PC-3 (cell line): ENCODE measurements at regions of chr3 and their contacts with region 1.

Region 1: DNA sequence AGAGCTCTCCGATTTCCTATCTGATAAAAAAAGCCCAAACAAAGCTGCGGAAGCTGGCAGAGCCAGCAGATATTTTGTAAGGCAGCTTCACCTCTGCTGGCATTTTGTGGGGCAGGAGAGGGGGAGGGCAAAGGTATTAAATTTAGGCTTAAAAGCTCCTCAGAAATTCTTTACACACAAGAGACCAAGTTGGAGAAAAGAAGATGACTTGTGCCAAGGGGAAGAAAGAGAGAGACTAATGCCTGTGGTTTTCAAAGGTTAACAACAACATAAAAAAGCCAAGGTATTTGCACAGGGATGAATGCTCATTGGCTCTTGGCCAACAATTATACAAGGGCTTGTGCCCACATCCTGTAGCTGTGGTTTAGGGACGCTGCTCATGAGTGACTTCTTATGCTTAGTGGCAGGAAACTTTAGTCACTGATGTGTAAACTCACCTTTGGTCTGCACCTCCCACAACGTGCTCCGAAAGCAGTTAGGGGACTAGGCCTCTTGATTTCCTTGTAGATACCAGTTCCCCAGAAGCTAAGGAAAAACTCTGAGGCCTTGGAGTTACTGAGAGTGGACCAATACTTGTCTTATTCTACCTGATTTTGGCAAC is 152.9 kb downstream of the TPRG1 start:
- DNase-seq: peak; percentile 99
- ATAC-seq: peak; percentile 96
- H3K4me3 ChIP-seq: no peak overlapping the region
- H3K27ac ChIP-seq: peak overlapping the region; percentile 85
- H3K4me1 ChIP-seq: peaks cover 26% of the 10 kb centered on the region
- H3K27me3 ChIP-seq: no peaks in the 10 kb centered on the region
- CTCF ChIP-seq: no peak

Region 2: GRCh38 chr3:189249987-189250386 is 74.7 kb before region 1 on chr3:
- CTCF ChIA-PET with region 1: no interaction called
- POLR2A ChIA-PET with region 1: no interaction called
- intact Hi-C with region 1: no loop called
- DNase-seq: no peak
- ATAC-seq: no peak
- H3K4me3 ChIP-seq: no peak overlapping the region
- H3K27ac ChIP-seq: no peak overlapping the region
- H3K4me1 ChIP-seq: no peaks in the 10 kb centered on the region
- H3K27me3 ChIP-seq: no peaks in the 10 kb centered on the region
- CTCF ChIP-seq: no peak

Region 3: DNA sequence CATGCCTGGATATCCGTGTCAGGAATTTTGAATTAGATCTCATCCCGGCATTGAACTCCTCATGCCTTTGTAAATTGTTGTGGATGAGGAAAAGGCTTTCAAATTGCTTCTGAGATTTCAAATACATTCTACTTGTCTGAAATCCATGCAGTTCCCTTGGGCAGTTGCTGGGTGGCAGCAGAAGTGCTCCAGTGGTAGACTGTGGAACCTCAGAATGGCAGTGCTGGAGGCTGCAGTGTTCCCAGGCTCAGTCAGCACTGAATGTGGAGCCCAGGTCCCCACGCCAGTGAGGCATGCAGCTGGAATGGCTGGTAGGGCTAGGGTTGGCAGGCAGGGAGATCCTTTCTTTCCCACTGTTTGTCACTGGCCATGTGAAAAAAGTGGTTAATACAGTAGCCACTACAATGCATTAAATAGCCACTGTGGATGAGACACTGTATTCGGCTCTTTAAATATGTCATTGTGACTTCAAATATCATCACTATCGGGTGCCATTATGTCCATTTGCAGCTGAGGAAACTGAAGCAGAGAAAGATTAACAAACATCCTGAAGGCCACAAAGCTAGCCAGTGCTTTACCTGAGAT is 54.3 kb before region 1 on chr3:
- CTCF ChIA-PET with region 1: interaction called, 11 read pairs
- POLR2A ChIA-PET with region 1: no interaction called
- intact Hi-C with region 1: loop called (anchors 1 kb)
- DNase-seq: peak; percentile 93
- ATAC-seq: peak; percentile 86
- H3K4me3 ChIP-seq: no peak overlapping the region
- H3K27ac ChIP-seq: peak overlapping the region; percentile 38
- H3K4me1 ChIP-seq: peaks cover 61% of the 10 kb centered on the region
- H3K27me3 ChIP-seq: no peaks in the 10 kb centered on the region
- CTCF ChIP-seq: peak; percentile 94

Region 4: GRCh38 chr3:189304446-189305351 is 19.9 kb before region 1 on chr3:
- CTCF ChIA-PET with region 1: interaction called, 3 read pairs
- POLR2A ChIA-PET with region 1: interaction called, 3 read pairs
- intact Hi-C with region 1: loop called (anchors 1 kb)
- DNase-seq: peak; percentile 99
- ATAC-seq: peak; percentile 83
- H3K4me3 ChIP-seq: peak overlapping the region; percentile 48; the same call in 1 of the 2 replicates
- H3K27ac ChIP-seq: peak overlapping the region; percentile 94
- H3K4me1 ChIP-seq: peaks cover 40% of the 10 kb centered on the region
- H3K27me3 ChIP-seq: no peaks in the 10 kb centered on the region
- CTCF ChIP-seq: no peak

Region 5: GRCh38 chr3:189512039-189512438 is 187.4 kb after region 1 on chr3:
- CTCF ChIA-PET with region 1: no interaction called
- POLR2A ChIA-PET with region 1: interaction called, 3 read pairs
- intact Hi-C with region 1: loop called (anchors 1 kb)
- DNase-seq: no peak
- ATAC-seq: no peak
- H3K4me3 ChIP-seq: no peak overlapping the region
- H3K27ac ChIP-seq: peak overlapping the region; percentile 82; the same call in 1 of the 2 replicates
- H3K4me1 ChIP-seq: peaks cover 21% of the 10 kb centered on the region
- H3K27me3 ChIP-seq: no peaks in the 10 kb centered on the region
- CTCF ChIP-seq: no peak

Region 6: GRCh38 chr3:189710620-189711402 is 386.2 kb after region 1 on chr3:
- CTCF ChIA-PET with region 1: interaction called, 4 read pairs
- POLR2A ChIA-PET with region 1: no interaction called
- intact Hi-C with region 1: loop called (anchors 1 kb)
- DNase-seq: peak; percentile 95
- ATAC-seq: peak; percentile 71
- H3K4me3 ChIP-seq: no peak overlapping the region
- H3K27ac ChIP-seq: peak overlapping the region; percentile 66
- H3K4me1 ChIP-seq: peaks cover 55% of the 10 kb centered on the region
- H3K27me3 ChIP-seq: no peaks in the 10 kb centered on the region
- CTCF ChIP-seq: no peak

Region 7: DNA sequence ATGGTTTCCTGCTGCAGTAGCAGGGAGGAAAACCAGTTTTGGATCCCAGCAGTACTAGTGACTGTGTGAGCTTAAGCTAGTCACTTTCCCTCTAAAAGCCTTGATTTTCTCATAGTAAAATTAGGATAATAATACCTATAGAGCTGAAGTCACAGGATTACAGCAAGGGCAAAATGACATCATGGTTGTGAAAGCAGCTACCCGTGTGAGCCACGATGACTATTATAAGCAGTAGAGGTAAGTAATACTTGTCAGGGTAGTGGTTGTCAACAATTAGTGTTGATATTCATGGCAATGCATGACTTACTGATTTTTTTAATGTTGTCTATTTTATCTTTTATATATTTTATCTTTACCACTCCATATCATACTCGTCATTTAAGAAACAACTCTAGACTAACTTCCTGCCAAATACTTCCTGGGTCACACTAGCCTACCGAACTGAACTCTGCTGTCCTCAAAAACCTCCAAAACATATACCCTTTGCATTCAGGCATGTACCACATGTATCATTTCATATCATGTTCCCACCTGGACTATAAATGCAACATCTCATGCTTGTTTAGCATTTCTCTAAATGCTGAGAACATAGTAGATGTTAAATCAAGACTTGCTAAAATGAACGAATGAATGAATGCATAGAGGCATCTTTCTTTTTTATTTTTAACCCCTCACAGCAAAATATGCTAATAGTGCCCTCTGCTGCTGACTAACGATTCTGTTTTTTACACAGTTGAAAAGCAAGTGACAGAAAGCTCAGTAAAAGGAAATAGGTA is 623.5 kb after region 1 on chr3:
- CTCF ChIA-PET with region 1: interaction called, 4 read pairs
- POLR2A ChIA-PET with region 1: no interaction called
- intact Hi-C with region 1: loop called (anchors 2 kb)
- DNase-seq: peak; percentile 86
- ATAC-seq: peak; percentile 50
- H3K4me3 ChIP-seq: no peak overlapping the region
- H3K27ac ChIP-seq: peak overlapping the region; percentile 34; the same call in 1 of the 2 replicates
- H3K4me1 ChIP-seq: peaks cover 37% of the 10 kb centered on the region
- H3K27me3 ChIP-seq: no peaks in the 10 kb centered on the region
- CTCF ChIP-seq: peak; percentile 93